ENCODE measurements at regions of chr3 and their contacts with region 1.

Region 1: GRCh38 chr3:17553080-17553479 is 189.4 kb downstream of the TBC1D5 start:
- DNase-seq: no peak
- ATAC-seq: peak; percentile 63 to 84
- H3K4me3 ChIP-seq: no peak overlapping the region
- H3K27ac ChIP-seq: peak overlapping the region; percentile 6 to 43 (median 34)
- H3K4me1 ChIP-seq: peaks cover 17 to 19% of the 10 kb centered on the region in 2 donors
- H3K27me3 ChIP-seq: no peaks in the 10 kb centered on the region
- CTCF ChIP-seq: no peak
- POLR2A ChIP-seq: no peak

Region 2: GRCh38 chr3:16928386-16929132 is 624.5 kb before region 1 on chr3:
- in situ Hi-C with region 1: no loop called
- intact Hi-C with region 1: no loop called
- DNase-seq: no peak
- ATAC-seq: no peak
- H3K4me3 ChIP-seq: no peak overlapping the region
- H3K27ac ChIP-seq: peak overlapping the region in 1 of 4 donors; percentile 6
- H3K4me1 ChIP-seq: peaks cover 28 to 42% of the 10 kb centered on the region in 2 donors
- H3K27me3 ChIP-seq: no peaks in the 10 kb centered on the region
- CTCF ChIP-seq: no peak
- POLR2A ChIP-seq: no peak

Region 3: DNA sequence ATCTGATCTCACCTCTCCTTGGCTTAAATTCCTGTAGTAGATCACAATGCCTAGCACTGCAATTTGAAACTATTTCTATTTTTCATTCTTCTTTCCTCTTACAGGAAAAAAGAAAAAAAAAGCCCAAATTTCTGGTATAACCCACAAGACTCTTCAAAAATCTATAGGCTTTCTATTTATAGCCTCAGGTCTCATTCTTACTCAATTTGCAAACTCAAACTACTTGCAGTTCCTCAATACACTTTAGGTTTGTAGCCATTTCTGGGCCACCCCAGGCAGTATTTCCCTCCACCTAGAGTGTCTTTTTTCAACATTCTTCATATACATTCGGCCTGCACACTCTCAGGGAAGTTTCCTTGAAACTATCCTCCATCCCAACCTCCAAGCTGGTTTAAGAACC is 20.3 kb after region 1 on chr3:
- in situ Hi-C with region 1: no loop called
- intact Hi-C with region 1: no loop called
- DNase-seq: no peak
- ATAC-seq: no peak
- H3K4me3 ChIP-seq: no peak overlapping the region
- H3K27ac ChIP-seq: no peak overlapping the region
- H3K4me1 ChIP-seq: no peaks in the 10 kb centered on the region
- H3K27me3 ChIP-seq: no peaks in the 10 kb centered on the region
- CTCF ChIP-seq: no peak
- POLR2A ChIP-seq: no peak

Region 4: GRCh38 chr3:17730318-17730967 is 177.4 kb after region 1 on chr3:
- in situ Hi-C with region 1: no loop called
- intact Hi-C with region 1: loop called (anchors 10 kb)
- DNase-seq: no peak
- ATAC-seq: no peak
- H3K4me3 ChIP-seq: no peak overlapping the region
- H3K27ac ChIP-seq: no peak overlapping the region
- H3K4me1 ChIP-seq: no peaks in the 10 kb centered on the region
- H3K27me3 ChIP-seq: no peaks in the 10 kb centered on the region
- CTCF ChIP-seq: no peak
- POLR2A ChIP-seq: no peak

Region 5: GRCh38 chr3:18189282-18190050 is 636.4 kb after region 1 on chr3:
- in situ Hi-C with region 1: no loop called
- intact Hi-C with region 1: no loop called
- DNase-seq: no peak
- ATAC-seq: no peak
- H3K4me3 ChIP-seq: no peak overlapping the region
- H3K27ac ChIP-seq: no peak overlapping the region
- H3K4me1 ChIP-seq: no peaks in the 10 kb centered on the region
- H3K27me3 ChIP-seq: no peaks in the 10 kb centered on the region
- CTCF ChIP-seq: no peak
- POLR2A ChIP-seq: no peak

Measured in gastrocnemius medialis (tissue), 4 donors.